ENCODE measurements at regions of chr13 and their contacts with region 1.

Region 1: DNA sequence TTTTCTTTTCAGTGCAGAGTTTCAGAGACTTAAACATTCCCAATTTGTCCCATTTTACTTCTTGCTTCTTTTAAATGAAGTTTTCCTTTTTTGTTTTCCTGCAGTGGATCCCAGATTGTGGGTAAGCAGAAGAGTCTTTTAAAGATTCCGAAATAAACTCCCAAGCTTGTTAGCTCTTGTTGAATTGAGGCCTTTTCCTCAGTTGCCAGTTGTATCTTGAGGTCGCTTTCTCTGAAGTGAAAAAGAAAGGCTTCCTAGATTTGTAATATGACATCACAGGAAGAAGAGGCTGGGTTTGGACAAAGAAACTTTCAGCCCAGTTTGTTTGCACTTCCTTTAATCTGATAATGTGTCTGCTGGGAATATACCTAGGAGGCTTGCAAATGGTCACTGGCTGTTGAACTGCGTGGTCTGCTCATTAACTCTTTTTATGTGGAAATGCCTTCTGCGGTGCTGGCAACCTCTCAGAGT is at the start of gene LPAR6:
- DNase-seq: peak; percentile 69
- ATAC-seq: peak; percentile 63
- H3K4me3 ChIP-seq: peak within 1 kb of the TSS; percentile 73
- H3K27ac ChIP-seq: peak within 1 kb of the TSS; percentile 72
- H3K4me1 ChIP-seq: peaks cover 26% of the 10 kb centered on the region
- H3K27me3 ChIP-seq: no peaks in the 10 kb centered on the region
- CTCF ChIP-seq: no peak
- total RNA-seq, gene LPAR6: 3.6 TPM in 2 replicates

Region 2: DNA sequence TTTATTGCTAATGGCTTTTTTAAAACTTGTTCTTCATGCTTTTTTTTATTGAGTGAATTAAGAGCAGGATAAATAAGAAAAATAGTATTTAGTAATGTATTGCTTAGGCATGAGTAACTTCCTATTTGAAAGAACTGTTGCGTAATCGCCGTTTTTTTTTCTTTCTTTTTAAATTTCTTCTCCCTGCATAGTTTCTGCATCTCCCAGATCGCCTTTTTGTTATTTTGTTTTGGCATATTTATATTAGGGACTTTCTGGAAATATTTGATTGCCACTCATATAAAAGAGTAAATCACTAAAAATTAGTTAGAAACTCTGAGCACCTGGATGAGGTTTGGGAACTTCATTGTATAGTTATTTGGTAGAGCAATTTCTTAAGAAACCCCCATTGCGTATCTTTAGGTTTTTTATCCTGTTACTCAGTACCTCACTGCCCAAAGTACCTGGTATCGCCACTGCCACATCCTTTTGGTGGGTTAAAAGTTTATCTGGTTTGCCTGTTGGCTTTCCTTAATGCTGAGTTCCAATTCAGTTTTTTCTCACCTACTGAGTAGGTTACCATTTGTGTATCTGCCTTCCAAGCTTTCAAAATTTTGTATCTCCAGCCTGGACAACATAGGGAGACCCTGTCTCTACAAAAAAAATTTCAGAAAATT is 36.2 kb after region 1 on chr13:
- CTCF ChIA-PET with region 1: no interaction called
- POLR2A ChIA-PET with region 1: no interaction called
- intact Hi-C with region 1: loop called (anchors 2 kb)
- DNase-seq: peak; percentile 78
- ATAC-seq: peak; percentile 29
- H3K4me3 ChIP-seq: peak overlapping the region; percentile 10; the same call in 1 of the 2 replicates
- H3K27ac ChIP-seq: peak overlapping the region; percentile 68
- H3K4me1 ChIP-seq: peaks cover 45% of the 10 kb centered on the region
- H3K27me3 ChIP-seq: no peaks in the 10 kb centered on the region
- CTCF ChIP-seq: no peak

Region 3: GRCh38 chr13:48532506-48533499 is 119.9 kb after region 1 on chr13 and contains the start of gene RCBTB2:
- CTCF ChIA-PET with region 1: no interaction called
- POLR2A ChIA-PET with region 1: interaction called, 5 read pairs
- intact Hi-C with region 1: loop called (anchors 5 kb)
- DNase-seq: peak; percentile 95
- ATAC-seq: peak; percentile 90
- H3K4me3 ChIP-seq: peak within 1 kb of the TSS; percentile 88
- H3K27ac ChIP-seq: peak within 1 kb of the TSS; percentile 54
- H3K4me1 ChIP-seq: peaks cover 7% of the 10 kb centered on the region; the same call in 1 of the 2 replicates
- H3K27me3 ChIP-seq: no peaks in the 10 kb centered on the region
- CTCF ChIP-seq: no peak
- total RNA-seq, gene RCBTB2: 2.1 and 2.5 TPM in 2 replicates

Region 4: DNA sequence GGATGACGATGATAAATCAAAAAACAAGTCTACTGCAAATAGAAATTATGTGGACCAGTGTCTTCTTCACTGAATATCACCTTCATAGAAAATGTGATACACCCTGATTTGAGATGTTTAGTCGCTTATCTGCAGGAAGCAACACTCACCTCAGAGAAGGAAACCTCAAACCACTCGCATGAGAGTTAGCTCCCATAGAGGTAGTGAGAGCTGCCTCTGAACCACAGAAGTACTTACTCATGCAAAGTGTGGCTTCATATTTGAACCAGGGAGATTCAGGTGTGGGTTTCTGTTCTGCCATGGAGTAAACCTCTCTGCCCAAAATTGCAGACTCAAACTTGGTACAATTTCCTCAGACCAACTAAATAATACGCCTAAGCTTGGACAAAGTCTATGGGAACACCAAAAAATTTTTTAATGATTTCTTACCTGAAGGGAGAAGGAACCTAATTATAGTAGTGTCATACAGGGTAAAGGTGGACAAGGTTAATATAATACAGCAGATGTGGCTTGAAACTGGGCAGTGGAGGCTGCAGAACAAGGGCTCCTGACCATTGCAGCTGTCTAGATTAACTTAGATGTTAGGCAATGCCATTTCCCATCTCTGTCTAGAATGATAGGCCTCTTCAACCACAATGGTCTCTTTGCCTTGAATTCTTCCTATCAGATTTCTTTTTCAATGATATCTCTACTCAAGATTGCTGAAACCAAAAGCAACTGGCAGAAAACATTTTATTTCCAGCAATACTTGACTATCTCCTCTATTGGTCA is 149.6 kb after region 1 on chr13:
- CTCF ChIA-PET with region 1: no interaction called
- POLR2A ChIA-PET with region 1: no interaction called
- intact Hi-C with region 1: loop called (anchors 5 kb)
- DNase-seq: peak; percentile 55
- ATAC-seq: peak; percentile 44
- H3K4me3 ChIP-seq: peak overlapping the region; percentile 20; the same call in 1 of the 2 replicates
- H3K27ac ChIP-seq: peak overlapping the region; percentile 88
- H3K4me1 ChIP-seq: peaks cover 43% of the 10 kb centered on the region
- H3K27me3 ChIP-seq: no peaks in the 10 kb centered on the region
- CTCF ChIP-seq: no peak

Measured in PC-3 (cell line).